Right ventricle myocardium inferior (tissue), 1 donor: ENCODE measurements at regions of chr4 and their contacts with region 1.

Region 1: DNA sequence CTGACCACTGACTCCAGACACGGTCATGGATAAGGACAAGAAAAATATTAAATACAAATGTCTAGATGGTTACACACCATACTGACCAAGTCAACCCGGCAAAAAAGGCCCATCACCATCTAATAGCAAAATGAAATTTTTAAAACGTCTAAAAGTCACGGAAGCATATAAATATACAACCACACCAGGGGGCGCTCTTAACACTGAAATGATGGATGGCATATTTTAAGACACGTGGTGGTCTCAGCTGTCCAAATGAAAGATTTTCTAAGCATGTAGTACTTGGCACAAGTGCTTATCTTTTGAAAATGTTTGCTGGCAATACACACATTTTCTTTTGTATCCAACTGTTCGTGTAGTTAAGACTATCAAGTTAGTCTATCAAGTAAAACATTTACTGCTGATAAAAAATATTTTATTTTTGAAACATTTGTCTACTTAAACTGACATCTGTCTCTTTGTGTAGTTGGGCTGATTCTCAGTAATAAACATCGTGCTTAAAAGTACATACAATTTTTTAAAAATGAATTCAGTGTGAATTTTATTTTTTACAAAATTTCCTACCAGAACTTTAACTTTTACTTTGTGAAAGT is 64.6 kb downstream of the COX7B2 start:
- DNase-seq: no peak
- ATAC-seq: no peak

Region 2: GRCh38 chr4:47032415-47033106 is 188.1 kb after region 1 on chr4:
- intact Hi-C with region 1: loop called (anchors 2 kb)
- DNase-seq: no peak
- ATAC-seq: peak; percentile 92

Region 3: DNA sequence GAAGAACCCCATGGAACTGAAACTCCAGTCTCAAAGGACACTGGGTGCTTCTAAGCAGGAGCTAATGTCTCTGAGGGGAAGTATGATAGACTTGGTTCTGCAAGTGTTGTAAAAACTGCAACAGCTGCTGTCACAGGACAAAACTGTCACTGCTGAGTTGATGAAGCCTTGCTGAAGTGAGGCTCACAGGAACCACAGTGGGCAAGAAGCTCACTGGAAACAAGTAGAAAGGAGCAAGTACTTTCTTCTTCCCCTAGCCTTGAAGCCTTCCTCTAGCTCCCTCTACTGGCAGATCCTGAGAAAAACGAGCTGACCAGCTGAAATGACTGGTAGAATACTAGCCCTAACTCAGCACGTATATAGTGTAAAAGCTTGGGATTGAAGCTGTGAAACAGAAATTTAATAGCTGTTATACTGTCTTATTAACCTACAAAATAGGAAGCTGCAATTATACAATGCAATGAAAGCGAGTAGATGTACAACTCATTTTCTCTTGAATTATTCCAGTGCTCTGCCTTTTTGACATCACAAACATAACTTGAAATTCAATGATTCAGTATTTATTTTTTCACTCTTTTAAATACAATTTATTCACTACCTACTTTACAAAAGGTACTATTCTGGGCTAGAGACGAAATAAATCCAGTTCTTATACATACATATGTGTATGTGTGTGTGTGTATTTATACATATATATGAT is 278.3 kb after region 1 on chr4:
- intact Hi-C with region 1: loop called (anchors 5 kb)
- DNase-seq: no peak
- ATAC-seq: peak; percentile 42

Region 4: GRCh38 chr4:47383829-47384427 is 539.5 kb after region 1 on chr4:
- intact Hi-C with region 1: loop called (anchors 5 kb)
- DNase-seq: no peak
- ATAC-seq: no peak

Region 5: GRCh38 chr4:47933840-47934239 is 1089.4 kb after region 1 on chr4:
- intact Hi-C with region 1: loop called (anchors 10 kb)
- DNase-seq: no peak
- ATAC-seq: no peak